Prostate gland (tissue), 2 donors: ENCODE measurements at regions of chr2 and their contacts with region 1.

Region 1: DNA sequence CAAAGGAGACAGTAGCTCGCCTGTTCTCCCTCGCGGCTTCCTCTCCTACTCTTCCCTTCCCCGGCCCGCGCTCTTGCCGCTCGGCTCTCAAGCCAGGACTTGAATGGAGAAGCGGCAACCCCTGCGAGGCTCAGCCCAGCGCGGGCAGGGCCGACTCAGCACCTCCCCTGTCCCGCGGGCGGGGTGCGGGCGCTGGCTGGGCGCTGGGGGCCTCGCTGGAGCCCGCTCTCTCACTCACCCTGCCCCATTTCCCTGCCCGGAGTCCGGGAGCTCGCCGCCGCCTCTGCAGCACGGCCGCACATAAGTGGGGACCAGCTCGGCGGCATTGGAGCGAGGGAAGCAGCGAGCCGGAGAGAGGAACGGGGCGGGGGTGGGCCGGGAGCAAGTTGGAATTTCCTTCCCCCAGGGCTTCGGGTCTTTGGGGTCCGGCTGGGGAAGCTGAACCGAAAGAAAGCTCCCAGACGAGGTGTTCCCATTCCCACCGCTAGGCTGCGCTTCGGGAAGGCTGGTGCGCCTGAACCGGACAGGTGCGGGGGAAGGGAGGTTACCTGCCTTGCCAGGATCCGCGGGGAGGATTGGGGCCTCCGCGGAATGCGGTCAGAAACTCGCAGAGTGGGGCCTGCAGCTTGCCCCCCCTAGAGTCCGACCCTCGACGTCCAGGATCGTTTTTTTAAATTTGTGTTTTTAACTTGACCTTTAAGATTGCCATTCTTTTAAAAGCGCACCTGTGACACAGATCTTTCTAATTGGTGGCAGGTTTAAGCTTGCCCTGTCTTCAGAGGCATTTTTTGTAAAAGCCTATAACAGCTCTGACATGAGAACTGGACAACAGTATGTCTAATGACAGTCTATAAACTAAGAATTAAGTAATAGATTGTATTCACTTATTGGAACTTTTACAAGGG is at the start of gene COBLL1:
- DNase-seq: peak; percentile 88
- H3K4me3 ChIP-seq: peak within 1 kb of the TSS; percentile 60 to 69
- H3K27ac ChIP-seq: peak within 1 kb of the TSS; percentile 98
- H3K4me1 ChIP-seq: no peaks in the 10 kb centered on the region
- H3K27me3 ChIP-seq: no peaks in the 10 kb centered on the region
- CTCF ChIP-seq: peak; percentile 61 to 92 (median 86)
- POLR2A ChIP-seq: peak; percentile 28
- total RNA-seq, gene COBLL1: 52.1 to 82.8 TPM

Region 2: GRCh38 chr2:164737612-164738081 is 104.3 kb before region 1 on chr2:
- intact Hi-C with region 1: loop called (anchors 2 kb)
- DNase-seq: peak; percentile 76
- H3K4me3 ChIP-seq: no peak overlapping the region
- H3K27ac ChIP-seq: no peak overlapping the region
- H3K4me1 ChIP-seq: no peaks in the 10 kb centered on the region
- H3K27me3 ChIP-seq: no peaks in the 10 kb centered on the region
- CTCF ChIP-seq: peak; percentile 38 to 89 (median 78)
- POLR2A ChIP-seq: no peak

Region 3: GRCh38 chr2:164917296-164917903 is 75.4 kb after region 1 on chr2:
- intact Hi-C with region 1: loop called (anchors 5 kb)
- DNase-seq: peak; percentile 51
- H3K4me3 ChIP-seq: no peak overlapping the region
- H3K27ac ChIP-seq: no peak overlapping the region
- H3K4me1 ChIP-seq: no peaks in the 10 kb centered on the region
- H3K27me3 ChIP-seq: no peaks in the 10 kb centered on the region
- CTCF ChIP-seq: peak in 3 of 4 experiments; percentile 54 to 76 (median 73)
- POLR2A ChIP-seq: no peak